Upper lobe of right lung (tissue), 1 donor: ENCODE measurements at regions of chr5 and their contacts with region 1.

Region 1: GRCh38 chr5:178449163-178450070 is 140.8 kb downstream of the COL23A1 start:
- DNase-seq: no peak
- ATAC-seq: peak; percentile 42
- H3K4me3 ChIP-seq: no peak overlapping the region
- H3K27ac ChIP-seq: no peak overlapping the region
- H3K4me1 ChIP-seq: no peaks in the 10 kb centered on the region
- H3K27me3 ChIP-seq: no peaks in the 10 kb centered on the region
- CTCF ChIP-seq: no peak

Region 2: GRCh38 chr5:178196986-178197385 is 252.4 kb before region 1 on chr5:
- intact Hi-C with region 1: no loop called
- DNase-seq: no peak
- ATAC-seq: peak; percentile 65
- H3K4me3 ChIP-seq: no peak overlapping the region
- H3K27ac ChIP-seq: no peak overlapping the region
- H3K4me1 ChIP-seq: no peaks in the 10 kb centered on the region
- H3K27me3 ChIP-seq: peaks cover 6% of the 10 kb centered on the region
- CTCF ChIP-seq: peak; percentile 49

Region 3: DNA sequence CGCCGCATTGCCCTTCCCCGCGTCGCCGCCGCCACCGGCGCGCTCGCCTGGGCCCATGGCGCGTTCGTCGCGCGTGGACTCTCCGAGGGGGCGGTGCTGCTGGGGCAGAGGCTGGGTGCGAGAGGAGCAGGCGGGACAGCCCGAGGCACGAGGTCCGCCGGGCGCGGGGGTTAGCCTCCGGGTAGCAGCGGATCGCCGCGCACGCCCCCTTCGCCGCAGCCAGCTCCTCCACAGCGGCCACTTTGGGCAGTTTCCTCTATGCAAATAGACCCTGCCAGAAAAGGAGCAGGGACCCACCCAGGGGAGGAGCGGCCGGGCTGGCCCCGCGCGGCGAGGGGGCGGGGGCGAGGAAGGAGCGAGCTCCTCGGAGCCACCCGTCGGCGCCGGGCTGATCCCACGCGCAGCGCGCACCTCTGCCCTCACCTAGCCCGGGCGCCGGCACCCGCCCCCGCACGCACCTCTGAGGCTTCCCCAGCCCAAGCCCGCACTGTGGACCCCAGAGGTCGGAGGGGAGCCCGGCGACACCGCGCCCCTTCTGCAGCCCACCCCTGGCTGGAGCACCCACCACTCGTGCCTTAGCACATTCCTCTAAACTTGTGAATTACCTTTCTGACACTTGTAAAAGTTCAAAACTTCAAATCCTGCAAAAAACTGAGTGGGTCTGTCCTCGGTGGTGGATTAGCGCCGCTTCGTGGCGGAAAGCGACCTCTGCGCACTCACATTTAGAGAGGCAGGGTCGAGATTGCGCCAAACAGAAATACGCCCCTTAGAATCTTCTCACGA is 140.9 kb after region 1 on chr5 and contains the start of gene COL23A1:
- intact Hi-C with region 1: loop called (anchors 10 kb)
- DNase-seq: peak; percentile 73
- ATAC-seq: peak; percentile 72
- H3K4me3 ChIP-seq: peak within 1 kb of the TSS; percentile 49
- H3K27ac ChIP-seq: no peak within 1 kb of the TSS
- H3K4me1 ChIP-seq: peaks cover 11% of the 10 kb centered on the region
- H3K27me3 ChIP-seq: peaks cover 11% of the 10 kb centered on the region
- CTCF ChIP-seq: peak; percentile 65
- total RNA-seq, gene COL23A1: 2.0 TPM

Region 4: GRCh38 chr5:178991190-178992145 is 542.1 kb after region 1 on chr5:
- intact Hi-C with region 1: no loop called
- DNase-seq: no peak
- ATAC-seq: no peak
- H3K4me3 ChIP-seq: no peak overlapping the region
- H3K27ac ChIP-seq: no peak overlapping the region
- H3K4me1 ChIP-seq: no peaks in the 10 kb centered on the region
- H3K27me3 ChIP-seq: peaks cover 5% of the 10 kb centered on the region
- CTCF ChIP-seq: no peak